ENCODE measurements at regions of chr17 and their contacts with region 1.

Region 1: DNA sequence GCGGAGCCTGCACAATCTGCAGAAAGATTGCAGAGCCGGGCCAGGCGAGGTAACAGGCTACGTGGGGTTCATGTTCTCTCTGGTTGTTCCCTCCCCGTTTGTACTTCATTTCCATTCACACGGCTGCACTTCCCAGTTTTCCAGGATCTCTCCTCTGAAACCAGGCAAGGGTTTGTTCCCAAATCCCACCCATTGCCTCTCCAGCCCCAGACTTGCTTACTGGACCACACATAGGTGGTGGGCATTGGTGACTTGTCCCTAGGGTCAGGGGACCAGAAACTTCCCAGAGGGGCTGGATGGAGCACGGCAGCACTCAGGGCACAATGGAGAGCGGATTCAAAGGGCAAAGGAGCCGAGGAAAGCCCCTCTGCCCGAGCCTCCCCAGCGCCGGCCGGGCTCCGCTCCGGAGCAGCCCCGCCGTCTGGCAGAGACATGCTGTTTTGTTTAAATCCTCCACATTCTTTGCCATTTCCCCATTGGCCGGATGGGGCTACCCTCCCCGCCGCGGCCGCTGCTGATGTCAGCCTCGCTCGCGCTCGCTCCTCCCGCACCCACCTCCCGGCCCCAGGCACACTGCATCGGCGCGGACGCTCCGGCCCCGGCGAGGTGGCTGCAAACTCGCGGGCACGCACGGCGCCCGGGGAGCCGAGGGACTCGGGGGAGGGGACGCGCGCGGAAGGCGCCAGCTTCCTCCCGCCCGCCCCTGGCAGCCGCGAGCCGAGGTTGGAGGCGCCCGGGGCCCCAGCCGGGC is at the start of gene PITPNC1:
- DNase-seq: peak; percentile 89
- ATAC-seq: peak; percentile 62
- H3K4me3 ChIP-seq: peak within 1 kb of the TSS; percentile 98
- H3K27ac ChIP-seq: peak within 1 kb of the TSS; percentile 74
- H3K4me1 ChIP-seq: peaks cover 39% of the 10 kb centered on the region
- H3K27me3 ChIP-seq: no peaks in the 10 kb centered on the region
- CTCF ChIP-seq: no peak
- total RNA-seq, gene PITPNC1: 23.1 and 25.4 TPM in 2 replicates

Region 2: DNA sequence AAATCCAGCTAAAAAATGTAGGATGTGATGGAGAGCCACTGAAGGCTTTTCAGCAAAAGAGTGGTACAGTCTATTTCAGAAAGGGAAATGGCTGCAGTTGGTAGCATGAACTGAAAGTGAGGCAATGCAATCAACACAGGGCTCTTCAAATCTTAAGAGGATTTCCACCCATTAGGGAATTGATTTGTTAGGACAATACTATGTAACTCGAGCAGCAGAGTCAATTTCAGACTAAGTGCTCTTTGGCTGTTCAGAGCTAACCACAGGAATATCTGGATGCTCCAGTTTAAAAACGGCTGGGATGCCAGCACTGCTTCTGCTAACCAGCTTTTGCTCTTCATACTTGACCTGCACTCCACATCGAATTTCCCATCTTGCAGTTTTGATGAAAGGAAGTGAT is 307.9 kb before region 1 on chr17:
- CTCF ChIA-PET with region 1: no interaction called
- POLR2A ChIA-PET with region 1: no interaction called
- intact Hi-C with region 1: no loop called
- DNase-seq: peak; percentile 14
- ATAC-seq: no peak
- H3K4me3 ChIP-seq: no peak overlapping the region
- H3K27ac ChIP-seq: no peak overlapping the region
- H3K4me1 ChIP-seq: no peaks in the 10 kb centered on the region
- H3K27me3 ChIP-seq: no peaks in the 10 kb centered on the region
- CTCF ChIP-seq: no peak

Region 3: DNA sequence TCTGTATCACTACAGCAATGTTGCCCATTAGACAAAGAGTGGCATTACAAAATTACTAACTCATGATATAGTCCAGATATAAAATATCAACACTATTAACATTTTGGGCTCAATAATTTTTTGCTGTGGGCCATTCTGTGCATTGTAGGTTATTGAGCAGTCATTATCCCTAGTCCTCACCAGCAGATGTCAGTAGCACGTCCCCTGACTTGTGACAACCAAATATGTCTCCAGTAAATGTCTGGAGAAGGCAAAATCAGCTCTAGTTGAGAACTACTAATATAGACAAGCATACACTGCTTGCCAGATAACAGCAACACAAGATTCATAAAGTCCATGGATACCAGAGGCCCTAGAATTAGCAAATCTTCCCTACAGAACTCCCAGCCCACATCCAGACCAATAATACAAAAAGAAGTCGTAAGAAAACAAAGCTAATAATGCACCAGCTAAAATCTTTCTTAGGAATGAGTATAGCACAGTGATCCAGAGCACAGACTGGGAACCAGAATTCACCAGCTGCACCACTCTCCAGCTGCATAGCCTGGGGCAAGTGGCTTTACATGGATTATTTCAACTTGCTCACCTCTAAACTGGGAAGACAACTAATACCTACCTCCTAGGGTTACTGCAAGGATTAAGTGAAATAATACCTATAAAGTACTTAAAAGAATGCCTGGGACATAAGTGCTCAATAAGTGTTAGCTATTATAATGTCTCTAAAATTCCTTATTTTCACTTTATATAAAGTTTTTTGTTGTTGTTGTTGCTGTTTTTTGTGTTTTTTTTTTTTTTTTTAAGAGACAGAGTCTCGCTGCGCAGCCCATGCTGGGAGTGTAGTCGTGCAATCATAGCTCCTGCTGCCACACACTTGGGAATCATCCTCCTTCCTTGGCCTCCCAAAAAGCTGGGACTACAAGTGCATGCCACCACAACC is 155.6 kb before region 1 on chr17:
- CTCF ChIA-PET with region 1: interaction called, 5 read pairs
- POLR2A ChIA-PET with region 1: interaction called, 10 read pairs
- intact Hi-C with region 1: no loop called
- DNase-seq: peak; percentile 54
- ATAC-seq: peak; percentile 66
- H3K4me3 ChIP-seq: no peak overlapping the region
- H3K27ac ChIP-seq: no peak overlapping the region
- H3K4me1 ChIP-seq: peaks cover 9% of the 10 kb centered on the region
- H3K27me3 ChIP-seq: no peaks in the 10 kb centered on the region
- CTCF ChIP-seq: peak; percentile 69

Region 4: GRCh38 chr17:67421869-67422273 is 45.0 kb after region 1 on chr17:
- CTCF ChIA-PET with region 1: interaction called, 3 read pairs
- POLR2A ChIA-PET with region 1: no interaction called
- intact Hi-C with region 1: loop called (anchors 5 kb)
- DNase-seq: peak; percentile 100
- ATAC-seq: peak; percentile 97
- H3K4me3 ChIP-seq: no peak overlapping the region
- H3K27ac ChIP-seq: peak overlapping the region; percentile 96
- H3K4me1 ChIP-seq: peaks cover 29% of the 10 kb centered on the region
- H3K27me3 ChIP-seq: no peaks in the 10 kb centered on the region
- CTCF ChIP-seq: no peak

Region 5: DNA sequence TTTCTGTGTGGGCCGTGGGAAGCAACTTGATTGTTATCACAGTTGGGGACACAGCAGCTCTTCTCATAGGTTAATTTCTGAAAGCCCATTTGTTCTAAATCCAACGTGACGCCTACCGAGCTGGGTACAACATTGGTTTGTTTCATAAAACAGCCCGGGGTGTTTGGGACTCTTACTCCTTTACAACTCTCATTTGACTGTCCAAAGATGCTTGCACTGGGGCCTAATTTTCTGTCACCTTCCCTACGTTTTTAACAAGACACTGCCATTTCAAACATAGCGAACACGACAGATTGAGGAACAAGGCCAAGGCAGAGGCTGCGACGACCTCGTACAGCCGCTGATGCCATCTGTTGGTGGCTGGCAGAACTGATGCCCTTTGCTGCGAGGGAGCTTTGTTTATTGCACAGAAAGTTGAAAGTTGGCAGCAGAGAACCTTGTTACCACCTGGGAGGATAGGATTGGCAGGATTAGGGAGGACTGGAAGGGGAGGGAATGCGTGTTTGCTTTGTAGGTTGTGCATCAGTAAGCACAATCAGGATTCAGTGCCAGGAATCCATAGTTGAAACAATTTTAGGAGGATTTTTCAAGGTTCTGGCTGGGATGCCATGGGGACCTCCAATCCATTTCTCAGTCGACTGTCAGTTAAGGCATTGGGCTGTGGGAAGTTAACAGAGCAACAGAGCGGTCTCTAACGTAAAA is 98.5 kb after region 1 on chr17:
- CTCF ChIA-PET with region 1: interaction called, 17 read pairs
- POLR2A ChIA-PET with region 1: interaction called, 19 read pairs
- intact Hi-C with region 1: loop called (anchors 1 kb)
- DNase-seq: peak; percentile 95
- ATAC-seq: peak; percentile 75
- H3K4me3 ChIP-seq: no peak overlapping the region
- H3K27ac ChIP-seq: peak overlapping the region; percentile 76
- H3K4me1 ChIP-seq: peaks cover 19% of the 10 kb centered on the region
- H3K27me3 ChIP-seq: no peaks in the 10 kb centered on the region
- CTCF ChIP-seq: peak; percentile 99

Region 6: GRCh38 chr17:67503184-67503583 is 126.3 kb after region 1 on chr17:
- CTCF ChIA-PET with region 1: no interaction called
- POLR2A ChIA-PET with region 1: no interaction called
- intact Hi-C with region 1: no loop called
- DNase-seq: peak; percentile 99
- ATAC-seq: peak; percentile 96
- H3K4me3 ChIP-seq: no peak overlapping the region
- H3K27ac ChIP-seq: peak overlapping the region; percentile 74
- H3K4me1 ChIP-seq: peaks cover 28% of the 10 kb centered on the region
- H3K27me3 ChIP-seq: no peaks in the 10 kb centered on the region
- CTCF ChIP-seq: no peak

Region 7: DNA sequence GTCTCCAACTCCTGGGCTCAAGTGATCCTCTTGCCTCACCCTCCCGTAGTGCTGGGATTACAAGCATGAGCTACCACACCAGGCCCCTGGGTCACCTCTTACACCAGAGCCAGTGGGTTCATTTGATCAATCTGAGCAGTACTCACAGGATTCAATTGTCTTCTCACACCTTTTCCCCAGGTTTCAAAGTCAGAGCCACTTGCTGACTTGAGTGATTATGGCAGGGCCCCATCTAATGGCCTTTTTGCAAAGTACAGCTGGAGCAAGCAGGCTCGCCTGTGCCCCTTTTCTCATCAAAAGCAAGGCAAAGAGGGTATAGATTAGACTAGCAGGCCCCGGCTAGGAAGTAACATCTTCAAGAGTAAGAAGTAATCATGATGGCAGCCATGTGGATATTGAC is 226.0 kb after region 1 on chr17:
- CTCF ChIA-PET with region 1: interaction called, 4 read pairs
- POLR2A ChIA-PET with region 1: no interaction called
- intact Hi-C with region 1: loop called (anchors 1 kb)
- DNase-seq: peak; percentile 75
- ATAC-seq: peak; percentile 91
- H3K4me3 ChIP-seq: no peak overlapping the region
- H3K27ac ChIP-seq: no peak overlapping the region
- H3K4me1 ChIP-seq: peaks cover 7% of the 10 kb centered on the region; the same call in 1 of the 2 replicates
- H3K27me3 ChIP-seq: no peaks in the 10 kb centered on the region
- CTCF ChIP-seq: peak; percentile 90

Region 8: GRCh38 chr17:67689534-67690177 is 312.7 kb after region 1 on chr17:
- CTCF ChIA-PET with region 1: interaction called, 3 read pairs
- POLR2A ChIA-PET with region 1: interaction called, 3 read pairs
- intact Hi-C with region 1: loop called (anchors 1 kb)
- DNase-seq: peak; percentile 86
- ATAC-seq: peak; percentile 58
- H3K4me3 ChIP-seq: no peak overlapping the region
- H3K27ac ChIP-seq: no peak overlapping the region
- H3K4me1 ChIP-seq: no peaks in the 10 kb centered on the region
- H3K27me3 ChIP-seq: no peaks in the 10 kb centered on the region
- CTCF ChIP-seq: peak; percentile 96

Measured in PC-3 (cell line).